ENCODE measurements at regions of chr3 and their contacts with region 1.

Region 1: GRCh38 chr3:122942937-122943827 is 84.4 kb downstream of the SEMA5B start:
- DNase-seq: peak in 4 of 5 donors; percentile 35 to 59 (median 47)
- H3K4me3 ChIP-seq: no peak overlapping the region
- H3K27ac ChIP-seq: no peak overlapping the region
- H3K4me1 ChIP-seq: peaks cover 3% of the 10 kb centered on the region
- H3K27me3 ChIP-seq: no peaks in the 10 kb centered on the region
- CTCF ChIP-seq: peak in 2 of 3 donors; percentile 49 to 57
- EP300 ChIP-seq: no peak
- POLR2A ChIP-seq: no peak

Region 2: GRCh38 chr3:122858373-122858772 is 84.8 kb before region 1 on chr3:
- intact Hi-C with region 1: loop called in 1 of 4 experiments (anchors 10 kb)
- DNase-seq: no peak
- H3K4me3 ChIP-seq: no peak overlapping the region
- H3K27ac ChIP-seq: no peak overlapping the region
- H3K4me1 ChIP-seq: no peaks in the 10 kb centered on the region
- H3K27me3 ChIP-seq: no peaks in the 10 kb centered on the region
- CTCF ChIP-seq: no peak
- EP300 ChIP-seq: no peak
- POLR2A ChIP-seq: no peak